H1 (cell line): ENCODE measurements at regions of chr12 and their contacts with region 1.

Region 1: GRCh38 chr12:31369712-31370521 is 44.0 kb upstream of the SINHCAF start:
- DNase-seq: no peak
- H3K4me3 ChIP-seq: peak overlapping the region; percentile 6 to 56 (median 42); a peak in 7 of 8 replicates
- H3K27ac ChIP-seq: peak overlapping the region; percentile 91
- H3K4me1 ChIP-seq: peaks cover 14 to 24% (median 18%) of the 10 kb centered on the region in 4 experiments; a peak in 6 of 7 replicates
- H3K27me3 ChIP-seq: no peaks in the 10 kb centered on the region
- CTCF ChIP-seq: no peak
- EP300 ChIP-seq: no peak
- POLR2A ChIP-seq: no peak
- RAD21 ChIP-seq: no peak

Region 2: DNA sequence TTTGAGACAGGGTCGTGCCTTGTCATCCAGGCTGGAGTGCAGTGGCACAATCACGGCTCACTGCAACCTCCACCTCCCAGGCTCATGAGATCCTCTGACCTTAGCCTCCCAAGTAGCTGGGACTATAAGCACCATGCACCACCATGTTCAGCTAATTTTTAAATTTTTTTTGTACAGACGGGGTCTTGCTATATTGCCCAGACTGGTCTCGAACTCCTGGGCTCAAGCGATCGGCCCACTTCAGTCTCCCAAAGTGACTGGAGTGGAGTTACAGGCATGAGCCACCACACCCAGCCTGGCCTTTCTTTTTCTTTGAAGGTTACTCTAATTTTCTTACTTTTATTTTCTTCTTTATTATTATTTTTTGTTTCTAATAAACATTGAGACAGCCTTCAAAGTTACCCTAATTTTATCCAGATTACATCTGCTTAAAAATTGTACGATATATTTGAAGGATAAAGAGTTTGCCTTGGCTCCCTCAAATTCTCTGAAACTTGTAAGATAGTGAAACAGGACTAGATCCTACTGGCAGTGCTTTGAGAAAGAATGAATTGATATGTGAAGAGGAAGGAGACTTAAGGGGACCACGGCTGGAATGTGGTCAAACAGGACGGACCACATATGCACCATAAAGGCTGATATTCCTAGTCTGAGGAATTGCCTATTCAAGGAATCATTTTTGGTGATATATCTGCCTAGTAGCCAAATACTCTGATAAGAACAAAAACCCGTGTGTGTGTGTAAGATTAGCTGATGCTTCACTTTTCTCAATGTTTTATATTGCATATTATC is 29.9 kb before region 1 on chr12:
- CTCF ChIA-PET with region 1: interaction called, 3 read pairs
- POLR2A ChIA-PET with region 1: interaction called, 68 read pairs
- DNase-seq: no peak
- H3K4me3 ChIP-seq: no peak overlapping the region; a peak in 1 of 8 replicates
- H3K27ac ChIP-seq: no peak overlapping the region
- H3K4me1 ChIP-seq: peaks cover 0 to 10% (median 5%) of the 10 kb centered on the region in 4 experiments; a peak in 4 of 7 replicates
- H3K27me3 ChIP-seq: no peaks in the 10 kb centered on the region
- CTCF ChIP-seq: no peak
- EP300 ChIP-seq: peak in 1 of 2 experiments; percentile 76; a peak in 1 of 3 replicates
- POLR2A ChIP-seq: no peak
- RAD21 ChIP-seq: no peak

Region 3: GRCh38 chr12:31353750-31354708 is 15.9 kb before region 1 on chr12:
- CTCF ChIA-PET with region 1: interaction called, 4 read pairs
- POLR2A ChIA-PET with region 1: interaction called, 14 read pairs
- DNase-seq: no peak
- H3K4me3 ChIP-seq: no peak overlapping the region; a peak in 1 of 8 replicates
- H3K27ac ChIP-seq: no peak overlapping the region; the same call in 1 of the 2 replicates
- H3K4me1 ChIP-seq: peaks cover 0 to 8% (median 5%) of the 10 kb centered on the region in 4 experiments; a peak in 3 of 7 replicates
- H3K27me3 ChIP-seq: no peaks in the 10 kb centered on the region
- CTCF ChIP-seq: no peak
- EP300 ChIP-seq: no peak
- POLR2A ChIP-seq: no peak
- RAD21 ChIP-seq: 0 out of 4 replicates have a peak, but pooled peaks of 1 of the 2 experiments have one; percentile 1

Region 4: DNA sequence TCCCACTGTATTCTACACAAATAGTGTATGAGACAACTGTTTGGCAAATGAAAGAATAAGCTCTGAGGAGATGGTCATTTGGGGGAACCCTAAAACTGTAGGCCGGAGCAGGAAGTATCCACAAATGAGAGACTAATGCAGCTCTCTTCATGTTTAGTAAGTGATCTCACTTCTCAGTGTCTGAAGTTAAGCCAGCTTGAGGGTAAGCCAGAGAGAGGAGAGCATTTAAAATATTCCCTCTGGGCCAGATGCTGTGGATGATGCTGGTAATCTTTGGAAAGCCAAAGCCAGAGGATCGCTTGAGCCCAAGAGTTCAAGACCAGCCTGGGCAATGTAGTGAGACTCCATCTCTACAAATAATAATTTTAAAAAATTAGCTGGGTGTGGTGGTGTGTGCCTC is 86.6 kb after region 1 on chr12:
- CTCF ChIA-PET with region 1: no interaction called
- POLR2A ChIA-PET with region 1: no interaction called
- DNase-seq: no peak
- H3K4me3 ChIP-seq: no peak overlapping the region
- H3K27ac ChIP-seq: no peak overlapping the region
- H3K4me1 ChIP-seq: no peaks in the 10 kb centered on the region
- H3K27me3 ChIP-seq: no peaks in the 10 kb centered on the region
- CTCF ChIP-seq: no peak
- EP300 ChIP-seq: no peak
- POLR2A ChIP-seq: no peak
- RAD21 ChIP-seq: no peak

Region 5: DNA sequence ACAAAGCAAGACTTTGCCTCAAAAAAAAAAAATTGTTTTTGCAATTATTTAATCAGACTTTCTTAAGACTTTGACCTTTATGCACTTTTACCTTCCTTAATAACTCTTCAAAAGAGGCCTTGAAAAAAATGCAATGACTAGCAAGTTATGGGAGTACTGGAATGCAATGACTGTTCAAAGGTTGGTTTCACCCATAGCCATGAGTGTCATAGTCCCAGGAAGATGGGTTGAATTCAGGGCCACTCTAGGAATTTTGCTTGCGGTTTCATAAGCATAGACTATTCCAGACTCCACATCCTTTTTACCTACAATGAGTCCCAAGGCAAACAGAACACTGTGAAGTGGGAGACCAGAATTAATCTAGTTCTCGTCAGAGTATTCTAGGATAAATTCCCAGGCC is 250.4 kb after region 1 on chr12:
- CTCF ChIA-PET with region 1: no interaction called
- POLR2A ChIA-PET with region 1: no interaction called
- DNase-seq: no peak
- H3K4me3 ChIP-seq: no peak overlapping the region
- H3K27ac ChIP-seq: no peak overlapping the region
- H3K4me1 ChIP-seq: no peaks in the 10 kb centered on the region
- H3K27me3 ChIP-seq: no peaks in the 10 kb centered on the region
- CTCF ChIP-seq: no peak
- EP300 ChIP-seq: no peak
- POLR2A ChIP-seq: no peak
- RAD21 ChIP-seq: no peak